Mucosa of descending colon (tissue), 3 donors: ENCODE measurements at regions of chr3 and their contacts with region 1.

Region 1: GRCh38 chr3:82133070-82133606 is 371.7 kb upstream of the GBE1 start:
- DNase-seq: peak in 2 of 3 donors; percentile 38 to 44
- ATAC-seq: peak; percentile 74
- H3K4me3 ChIP-seq: no peak overlapping the region
- H3K4me1 ChIP-seq: no peaks in the 10 kb centered on the region
- CTCF ChIP-seq: peak; percentile 36

Region 2: GRCh38 chr3:81666493-81667121 is 466.5 kb before region 1 on chr3:
- intact Hi-C with region 1: loop called in 1 of 2 experiments (anchors 10 kb)
- DNase-seq: peak in 1 of 3 donors; percentile 7
- ATAC-seq: no peak
- H3K4me3 ChIP-seq: no peak overlapping the region
- H3K4me1 ChIP-seq: no peaks in the 10 kb centered on the region
- CTCF ChIP-seq: peak; percentile 58